Gastrocnemius medialis (tissue), 4 donors: ENCODE measurements at regions of chr11 and their contacts with region 1.

Region 1: GRCh38 chr11:64723117-64723906 is at the start of gene NRXN2:
- DNase-seq: peak; percentile 65 to 78
- ATAC-seq: peak; percentile 94 to 95
- H3K4me3 ChIP-seq: peak within 1 kb of the TSS; percentile 79 to 97 (median 88)
- H3K27ac ChIP-seq: peak within 1 kb of the TSS; percentile 70 to 76 (median 74)
- H3K4me1 ChIP-seq: peaks cover 0 to 7% of the 10 kb centered on the region in 2 donors
- H3K27me3 ChIP-seq: peaks cover 0 to 12% (median 11%) of the 10 kb centered on the region in 3 donors
- CTCF ChIP-seq: peak; percentile 96 to 99 (median 97)
- POLR2A ChIP-seq: no peak
- total RNA-seq, gene NRXN2: 0.15 to 6.2 (median 1.8) TPM

Region 2: DNA sequence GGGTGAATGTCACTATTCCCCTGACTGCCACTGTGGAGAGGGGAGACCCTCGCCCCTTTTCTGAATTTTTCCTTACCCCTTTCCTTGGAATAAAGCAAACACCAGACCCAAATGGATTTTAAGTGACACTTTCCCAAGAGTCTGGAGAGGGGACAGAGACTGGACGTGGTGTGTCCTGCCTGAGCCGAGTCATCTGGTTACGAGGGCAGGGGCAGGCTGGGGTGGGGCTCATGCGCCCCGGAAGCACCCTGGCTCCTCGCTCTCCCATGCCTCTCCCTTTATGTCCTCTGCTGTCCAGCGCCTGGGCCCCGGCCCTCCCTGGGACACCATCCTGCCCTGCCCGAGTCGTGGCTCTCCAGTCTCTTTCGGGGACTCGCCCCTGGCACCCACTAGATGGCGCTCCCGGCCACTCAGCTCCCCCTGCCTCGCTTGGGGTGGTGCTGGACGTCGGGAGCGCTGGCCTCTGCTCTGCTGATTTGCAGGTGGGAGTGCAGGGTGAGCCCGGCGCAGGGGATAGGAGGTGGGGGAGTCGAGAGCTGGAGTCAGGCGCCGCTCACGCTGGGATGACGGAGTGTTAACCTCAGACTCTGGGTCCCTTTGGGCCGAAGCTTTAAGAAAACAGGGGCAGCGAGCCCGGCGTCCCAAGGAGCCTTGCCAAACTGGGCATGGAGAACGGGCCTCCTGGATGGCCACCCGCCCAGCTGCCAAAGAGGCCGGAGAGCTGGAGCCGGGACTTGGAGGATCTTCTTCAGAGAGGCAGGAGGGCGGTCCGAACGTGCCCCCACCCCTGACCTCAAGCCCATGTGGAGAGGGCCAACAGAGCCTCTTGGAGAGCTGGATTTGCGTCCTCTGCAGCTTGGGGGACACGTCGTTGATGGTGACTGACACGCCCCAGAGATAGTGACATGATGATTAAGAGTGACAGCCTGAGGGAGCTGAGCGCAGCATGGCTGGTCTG is 274.4 kb before region 1 on chr11:
- in situ Hi-C with region 1: no loop called
- intact Hi-C with region 1: loop called (anchors 5 kb)
- DNase-seq: peak; percentile 68 to 76
- ATAC-seq: peak; percentile 84 to 88
- H3K4me3 ChIP-seq: peak overlapping the region; percentile 34 to 59 (median 42)
- H3K27ac ChIP-seq: peak overlapping the region; percentile 16 to 46 (median 42)
- H3K4me1 ChIP-seq: peaks cover 13 to 14% of the 10 kb centered on the region in 2 donors
- H3K27me3 ChIP-seq: no peaks in the 10 kb centered on the region
- CTCF ChIP-seq: peak; percentile 64 to 88 (median 80)
- POLR2A ChIP-seq: no peak

Region 3: DNA sequence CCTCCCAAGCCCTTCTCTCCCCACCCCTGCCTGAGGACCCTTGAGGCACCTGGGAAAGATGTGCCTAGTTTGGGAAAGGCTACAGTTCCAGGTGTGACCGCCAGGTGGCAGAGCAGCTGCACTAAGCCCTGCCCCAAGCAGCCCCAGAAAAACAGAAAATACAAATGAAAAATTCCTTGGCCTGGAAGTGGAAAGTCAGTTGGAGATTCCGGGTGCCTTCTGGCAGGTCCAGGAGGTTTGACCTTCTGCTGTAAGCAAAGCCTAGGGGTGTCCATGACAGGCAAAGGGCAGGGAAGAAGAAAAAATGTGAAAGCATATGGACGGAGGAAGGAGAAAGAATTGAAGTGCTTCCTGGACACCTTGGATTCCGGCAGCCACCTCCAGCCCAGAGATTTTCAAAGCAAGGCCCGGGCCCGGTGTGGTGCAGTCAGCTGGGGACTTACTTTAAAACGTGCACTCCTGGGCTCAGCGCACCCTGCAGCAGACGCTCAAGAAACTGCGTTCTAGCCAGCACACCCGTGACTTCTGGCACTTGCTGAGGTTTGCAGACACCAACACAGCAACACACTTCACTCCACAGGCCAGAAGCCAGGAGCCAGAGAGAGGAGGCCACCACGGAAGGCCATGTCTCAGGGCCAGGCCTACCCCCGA is 169.6 kb before region 1 on chr11:
- in situ Hi-C with region 1: no loop called
- intact Hi-C with region 1: loop called (anchors 1 kb)
- DNase-seq: peak in 1 of 2 donors; percentile 40
- ATAC-seq: peak; percentile 53 to 69
- H3K4me3 ChIP-seq: no peak overlapping the region
- H3K27ac ChIP-seq: peak overlapping the region in 1 of 4 donors; percentile 31
- H3K4me1 ChIP-seq: peaks cover 8 to 11% of the 10 kb centered on the region in 2 donors
- H3K27me3 ChIP-seq: peaks cover 0 to 2% (median 0%) of the 10 kb centered on the region in 3 donors
- CTCF ChIP-seq: peak; percentile 86 to 98 (median 95)
- POLR2A ChIP-seq: no peak

Region 4: DNA sequence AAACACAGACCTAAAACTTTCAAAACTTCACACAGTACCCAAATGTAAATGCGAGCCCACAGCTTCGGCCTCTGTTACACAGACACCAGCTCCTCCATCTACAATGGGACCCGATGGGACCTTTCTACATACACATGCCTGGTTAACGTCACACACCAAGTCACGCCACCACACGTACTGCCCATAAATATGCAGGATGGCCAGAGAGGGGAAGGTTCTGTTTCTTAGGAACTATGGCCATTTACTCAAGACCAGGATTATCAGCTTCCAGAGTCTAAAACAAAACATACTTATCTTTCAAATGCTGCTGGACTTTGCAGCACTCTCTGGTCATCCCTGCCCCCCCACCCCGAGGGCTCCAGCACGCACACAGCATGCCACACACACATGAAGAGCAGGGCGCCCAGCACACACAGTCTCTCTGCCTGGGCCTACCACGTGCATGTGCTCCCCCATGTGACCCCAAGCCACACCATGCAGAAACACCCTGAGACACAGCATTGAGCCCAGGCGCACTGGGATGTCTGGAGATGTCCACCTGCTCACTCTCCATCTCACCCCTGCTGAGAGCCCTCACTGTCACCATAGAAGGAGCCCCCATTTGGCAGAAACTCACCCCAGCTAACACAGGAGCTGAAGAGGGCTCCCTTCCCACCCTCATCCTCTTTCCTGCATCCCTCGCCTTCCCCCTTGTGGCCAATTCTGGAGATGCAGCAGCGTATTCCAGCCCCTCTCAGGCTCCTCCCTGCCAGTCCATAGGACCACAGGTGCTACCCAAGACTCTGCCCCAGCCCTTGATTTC is 70.5 kb before region 1 on chr11:
- in situ Hi-C with region 1: no loop called
- intact Hi-C with region 1: loop called (anchors 1 kb)
- DNase-seq: peak; percentile 39 to 59
- ATAC-seq: peak; percentile 51 to 90
- H3K4me3 ChIP-seq: no peak overlapping the region
- H3K27ac ChIP-seq: no peak overlapping the region
- H3K4me1 ChIP-seq: peaks cover 0 to 3% of the 10 kb centered on the region in 2 donors
- H3K27me3 ChIP-seq: no peaks in the 10 kb centered on the region
- CTCF ChIP-seq: peak; percentile 62 to 88 (median 84)
- POLR2A ChIP-seq: no peak

Region 5: GRCh38 chr11:64688534-64688982 is 34.8 kb before region 1 on chr11:
- in situ Hi-C with region 1: no loop called
- intact Hi-C with region 1: loop called (anchors 1 kb)
- DNase-seq: peak; percentile 81 to 92
- ATAC-seq: peak; percentile 91 to 95
- H3K4me3 ChIP-seq: peak overlapping the region; percentile 46 to 72 (median 50)
- H3K27ac ChIP-seq: peak overlapping the region; percentile 80 to 88 (median 81)
- H3K4me1 ChIP-seq: peaks cover 22 to 28% of the 10 kb centered on the region in 2 donors
- H3K27me3 ChIP-seq: no peaks in the 10 kb centered on the region
- CTCF ChIP-seq: peak; percentile 91 to 97 (median 95)
- POLR2A ChIP-seq: no peak

Region 6: DNA sequence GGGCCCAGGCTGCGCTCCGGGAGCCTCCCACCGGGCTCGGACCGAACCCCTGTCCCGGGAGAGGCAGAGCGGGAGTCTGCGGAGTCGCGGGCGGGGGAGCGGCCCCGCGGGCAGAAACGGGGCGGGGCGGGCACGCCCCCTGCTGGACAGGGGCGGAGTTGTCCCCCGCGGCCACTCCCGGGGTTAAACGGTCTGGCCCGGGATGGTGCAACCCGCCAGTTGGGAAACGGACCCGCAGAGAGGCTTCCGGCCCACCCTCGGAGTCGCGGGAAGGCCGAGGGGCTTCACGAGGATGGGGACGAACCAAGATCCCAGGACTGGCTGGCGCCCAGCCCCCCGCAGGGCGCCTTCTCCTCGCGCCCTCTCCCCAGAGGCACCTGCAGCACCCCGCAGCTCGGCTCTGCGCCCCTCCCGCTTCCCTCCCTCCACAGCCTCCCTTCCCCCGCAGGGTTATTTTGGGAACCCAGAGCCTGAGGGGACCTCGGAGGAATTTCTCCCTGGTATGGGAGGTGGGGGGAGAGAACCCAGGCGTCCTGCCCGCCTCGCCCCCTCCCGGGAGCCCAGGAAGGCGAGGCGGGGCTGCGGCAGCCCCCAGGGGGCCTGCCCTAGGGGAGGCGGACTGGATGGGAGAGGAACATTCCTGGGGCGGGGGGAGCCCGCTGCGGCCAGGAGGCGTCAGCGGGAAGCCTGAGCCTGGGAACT is 19.7 kb after region 1 on chr11:
- in situ Hi-C with region 1: no loop called
- intact Hi-C with region 1: loop called (anchors 1 kb)
- DNase-seq: peak; percentile 48 to 84
- ATAC-seq: peak; percentile 55 to 61
- H3K4me3 ChIP-seq: peak overlapping the region; percentile 59 to 88 (median 76)
- H3K27ac ChIP-seq: peak overlapping the region; percentile 86 to 99 (median 93)
- H3K4me1 ChIP-seq: peaks cover 16 to 32% of the 10 kb centered on the region in 2 donors
- H3K27me3 ChIP-seq: no peaks in the 10 kb centered on the region
- CTCF ChIP-seq: peak; percentile 76 to 96 (median 95)
- POLR2A ChIP-seq: peak; percentile 37 to 68

Region 7: GRCh38 chr11:64960719-64961118 is 237.4 kb after region 1 on chr11:
- in situ Hi-C with region 1: no loop called
- intact Hi-C with region 1: no loop called
- DNase-seq: no peak
- ATAC-seq: no peak
- H3K4me3 ChIP-seq: no peak overlapping the region
- H3K27ac ChIP-seq: no peak overlapping the region
- H3K4me1 ChIP-seq: no peaks in the 10 kb centered on the region
- H3K27me3 ChIP-seq: no peaks in the 10 kb centered on the region
- CTCF ChIP-seq: no peak
- POLR2A ChIP-seq: no peak